Activated T-helper 1 cell treated with anti-CD3 and anti-CD28 coated beads, Interleukin-12 subunit alpha, Interleukin-12 subunit beta, Interleukin-2, Interleukin-4 antibody, amounts not matched to agents 30 ng/mL and 10 ng/mL and 1 ng/mL, durations not matched to agents 14 hours and 24 hours and 36 hours (primary cell): ENCODE measurements at regions of chr3 and their contacts with region 1.

Region 1: DNA sequence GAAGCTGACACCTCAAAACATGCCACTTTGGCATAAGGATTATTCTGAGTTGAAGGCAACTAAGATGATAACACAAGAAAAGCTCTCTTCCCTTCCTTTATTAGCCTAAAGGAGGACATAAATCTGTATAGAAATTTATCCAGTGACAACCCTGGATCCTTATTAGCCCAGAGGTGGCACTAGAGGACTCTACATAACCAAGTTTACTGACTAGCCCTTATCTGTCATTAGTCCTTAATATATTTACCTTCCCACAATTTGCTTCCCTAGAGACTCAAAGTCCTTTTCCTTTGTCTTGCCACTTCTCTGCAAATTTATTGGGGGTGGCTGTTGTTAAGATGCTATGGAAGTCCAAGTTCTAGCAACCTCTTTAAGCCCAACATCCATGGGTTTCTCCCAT is 26.7 kb downstream of the CEP70 start:
- DNase-seq: no peak
- H3K4me3 Mint-ChIP-seq: no peak overlapping the region
- H3K27ac Mint-ChIP-seq: no peak overlapping the region
- H3K4me1 Mint-ChIP-seq: peaks cover 19% of the 10 kb centered on the region
- H3K27me3 Mint-ChIP-seq: no peaks in the 10 kb centered on the region

Region 2: GRCh38 chr3:138417559-138417982 is 149.8 kb before region 1 on chr3:
- intact Hi-C with region 1: no loop called
- DNase-seq: peak; percentile 42
- H3K4me3 Mint-ChIP-seq: no peak overlapping the region
- H3K27ac Mint-ChIP-seq: no peak overlapping the region
- H3K4me1 Mint-ChIP-seq: no peaks in the 10 kb centered on the region
- H3K27me3 Mint-ChIP-seq: peaks cover 13% of the 10 kb centered on the region

Region 3: GRCh38 chr3:138513090-138513843 is 54.1 kb before region 1 on chr3:
- intact Hi-C with region 1: loop called (anchors 1 kb)
- DNase-seq: peak; percentile 3
- H3K4me3 Mint-ChIP-seq: peak overlapping the region; percentile 37
- H3K27ac Mint-ChIP-seq: peak overlapping the region; percentile 13
- H3K4me1 Mint-ChIP-seq: peaks cover 28% of the 10 kb centered on the region
- H3K27me3 Mint-ChIP-seq: no peaks in the 10 kb centered on the region

Region 4: DNA sequence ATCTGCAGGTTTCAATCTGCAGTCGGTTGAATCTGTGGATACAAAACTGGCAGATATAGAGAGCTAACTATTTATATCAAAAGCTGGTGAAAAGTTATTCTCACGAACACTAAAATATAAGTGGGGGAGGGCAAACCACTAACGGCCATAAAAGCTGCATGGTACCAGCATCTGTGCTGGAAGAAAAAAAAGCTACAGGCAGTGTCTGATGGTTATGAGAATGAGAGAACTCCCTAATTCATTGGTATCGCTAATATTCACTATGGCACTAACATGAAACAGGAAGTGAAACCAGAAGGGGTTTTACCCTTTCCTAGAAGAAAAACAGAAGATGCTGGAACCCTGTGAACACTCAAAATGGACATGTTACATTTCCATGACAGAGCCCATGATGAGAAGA is 10.7 kb after region 1 on chr3:
- intact Hi-C with region 1: loop called (anchors 1 kb)
- DNase-seq: no peak
- H3K4me3 Mint-ChIP-seq: peak overlapping the region; percentile 9
- H3K27ac Mint-ChIP-seq: no peak overlapping the region
- H3K4me1 Mint-ChIP-seq: peaks cover 19% of the 10 kb centered on the region
- H3K27me3 Mint-ChIP-seq: no peaks in the 10 kb centered on the region